Natural killer cell (primary cell): ENCODE measurements at regions of chr5 and their contacts with region 1.

Region 1: GRCh38 chr5:134304311-134304710 is 62.7 kb downstream of the CDKL3 start:
- DNase-seq: no peak
- ATAC-seq: no peak
- H3K4me3 ChIP-seq: no peak overlapping the region
- H3K4me3 Mint-ChIP-seq: no peak overlapping the region
- H3K27ac ChIP-seq: no peak overlapping the region
- H3K27ac Mint-ChIP-seq: no peak overlapping the region
- H3K4me1 ChIP-seq: no peaks in the 10 kb centered on the region
- H3K4me1 Mint-ChIP-seq: no peaks in the 10 kb centered on the region
- H3K27me3 ChIP-seq: no peaks in the 10 kb centered on the region
- H3K27me3 Mint-ChIP-seq: peaks cover 0 to 2% of the 10 kb centered on the region in 2 donors
- CTCF ChIP-seq: no peak

Region 2: DNA sequence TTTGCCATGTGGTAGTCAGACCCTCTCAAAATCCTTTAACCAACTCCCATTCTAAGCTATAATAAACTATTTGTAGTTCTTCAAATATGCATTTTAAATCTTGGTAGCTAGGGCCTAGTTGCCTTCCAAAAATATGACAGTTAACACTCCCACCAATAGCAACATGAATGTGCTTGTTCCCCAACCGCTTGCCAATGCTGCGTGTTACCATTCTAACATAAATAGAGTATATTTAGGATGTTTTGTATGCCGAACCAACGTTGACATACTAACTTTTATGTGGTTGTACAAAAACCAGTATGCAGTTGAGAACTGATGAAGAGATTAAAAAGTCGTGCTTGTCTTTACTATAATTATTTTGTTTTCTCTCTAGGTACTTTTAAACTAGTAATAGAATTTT is 76.0 kb after region 1 on chr5:
- intact Hi-C with region 1: loop called (anchors 2 kb)
- DNase-seq: peak in 1 of 2 donors; percentile 40
- ATAC-seq: no peak
- H3K4me3 ChIP-seq: no peak overlapping the region
- H3K4me3 Mint-ChIP-seq: no peak overlapping the region
- H3K27ac ChIP-seq: no peak overlapping the region
- H3K27ac Mint-ChIP-seq: peak overlapping the region; percentile 34 to 57
- H3K4me1 ChIP-seq: peaks cover 3% of the 10 kb centered on the region
- H3K4me1 Mint-ChIP-seq: peaks cover 27 to 31% of the 10 kb centered on the region in 2 donors
- H3K27me3 ChIP-seq: no peaks in the 10 kb centered on the region
- H3K27me3 Mint-ChIP-seq: no peaks in the 10 kb centered on the region
- CTCF ChIP-seq: no peak

Region 3: GRCh38 chr5:134577796-134578363 is 273.6 kb after region 1 on chr5:
- intact Hi-C with region 1: loop called (anchors 2 kb)
- DNase-seq: peak; percentile 74 to 87
- ATAC-seq: peak; percentile 69 to 90 (median 74)
- H3K4me3 ChIP-seq: no peak overlapping the region
- H3K4me3 Mint-ChIP-seq: no peak overlapping the region
- H3K27ac ChIP-seq: no peak overlapping the region
- H3K27ac Mint-ChIP-seq: peak overlapping the region; percentile 70 to 73
- H3K4me1 ChIP-seq: peaks cover 7% of the 10 kb centered on the region
- H3K4me1 Mint-ChIP-seq: peaks cover 30 to 32% of the 10 kb centered on the region in 2 donors
- H3K27me3 ChIP-seq: no peaks in the 10 kb centered on the region
- H3K27me3 Mint-ChIP-seq: no peaks in the 10 kb centered on the region
- CTCF ChIP-seq: peak; percentile 78

Region 4: GRCh38 chr5:135246923-135247795 is 942.8 kb after region 1 on chr5:
- intact Hi-C with region 1: no loop called
- DNase-seq: no peak
- ATAC-seq: no peak
- H3K4me3 ChIP-seq: no peak overlapping the region
- H3K4me3 Mint-ChIP-seq: no peak overlapping the region
- H3K27ac ChIP-seq: no peak overlapping the region
- H3K27ac Mint-ChIP-seq: no peak overlapping the region
- H3K4me1 ChIP-seq: no peaks in the 10 kb centered on the region
- H3K4me1 Mint-ChIP-seq: no peaks in the 10 kb centered on the region
- H3K27me3 ChIP-seq: no peaks in the 10 kb centered on the region
- H3K27me3 Mint-ChIP-seq: peaks cover 0 to 2% of the 10 kb centered on the region in 2 donors
- CTCF ChIP-seq: no peak